ENCODE measurements at regions of chr1 and their contacts with region 1.

Region 1: GRCh38 chr1:36223993-36224536 is at the start of gene THRAP3:
- DNase-seq: peak; percentile 100
- H3K4me3 Mint-ChIP-seq: peak within 1 kb of the TSS; percentile 95
- H3K27ac Mint-ChIP-seq: peak within 1 kb of the TSS; percentile 100
- H3K4me1 Mint-ChIP-seq: peaks cover 36% of the 10 kb centered on the region
- H3K27me3 Mint-ChIP-seq: peaks cover 2% of the 10 kb centered on the region
- total RNA-seq, gene THRAP3: 147 and 154 TPM in 2 replicates

Region 2: GRCh38 chr1:35882945-35883634 is 341.0 kb before region 1 on chr1 and contains the start of gene AGO1:
- intact Hi-C with region 1: loop called (anchors 1 kb)
- DNase-seq: peak; percentile 97
- H3K4me3 Mint-ChIP-seq: peak within 1 kb of the TSS; percentile 95
- H3K27ac Mint-ChIP-seq: peak within 1 kb of the TSS; percentile 64
- H3K4me1 Mint-ChIP-seq: peaks cover 48% of the 10 kb centered on the region
- H3K27me3 Mint-ChIP-seq: peaks cover 6% of the 10 kb centered on the region
- total RNA-seq, gene AGO1: 39.0 and 39.5 TPM in 2 replicates

Region 3: DNA sequence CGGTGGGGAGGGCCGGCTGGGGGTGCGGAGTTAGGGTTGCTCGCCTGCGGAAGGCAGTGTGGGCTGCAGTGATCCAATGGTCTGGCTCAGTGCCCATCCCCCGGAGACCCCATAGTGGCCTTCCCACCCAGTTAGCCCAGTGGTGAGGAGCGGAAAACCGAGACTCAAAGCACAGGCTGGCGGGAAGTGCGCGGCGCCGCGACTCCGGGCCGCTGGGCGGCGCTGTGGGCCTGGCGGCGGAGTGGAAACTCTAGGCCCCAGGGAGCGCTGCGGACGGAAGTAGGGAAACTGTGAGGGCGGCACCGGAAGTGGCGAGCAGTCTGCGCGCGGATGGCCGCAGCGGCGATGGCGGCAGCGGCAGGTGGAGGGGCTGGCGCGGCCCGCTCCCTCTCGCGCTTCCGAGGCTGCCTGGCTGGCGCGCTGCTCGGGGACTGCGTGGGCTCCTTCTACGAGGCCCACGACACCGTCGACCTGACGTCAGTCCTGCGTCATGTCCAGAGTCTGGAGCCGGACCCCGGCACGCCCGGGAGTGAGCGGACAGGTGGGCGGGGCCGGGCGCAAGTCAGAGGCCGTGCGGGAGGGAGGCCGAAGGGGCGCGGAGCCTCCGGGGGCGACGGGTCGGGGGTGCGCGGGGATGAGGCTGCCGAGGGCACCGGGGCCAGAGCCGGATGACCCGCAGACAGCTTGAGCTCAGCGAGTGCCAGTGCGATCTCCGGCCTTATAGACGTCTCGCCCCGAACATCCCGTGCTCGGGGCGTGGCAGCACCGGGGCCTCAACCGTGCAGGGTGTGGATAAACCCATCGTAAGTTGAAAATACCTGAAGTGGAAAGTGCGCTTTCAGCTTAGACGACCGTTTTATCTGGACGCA is 135.3 kb before region 1 on chr1 and contains the start of gene ADPRS:
- intact Hi-C with region 1: loop called (anchors 1 kb)
- DNase-seq: peak; percentile 88
- H3K4me3 Mint-ChIP-seq: peak within 1 kb of the TSS; percentile 97
- H3K27ac Mint-ChIP-seq: peak within 1 kb of the TSS; percentile 96
- H3K4me1 Mint-ChIP-seq: peaks cover 20% of the 10 kb centered on the region
- H3K27me3 Mint-ChIP-seq: peaks cover 7% of the 10 kb centered on the region
- total RNA-seq, gene ADPRS: 32.6 and 33.6 TPM in 2 replicates

Region 4: DNA sequence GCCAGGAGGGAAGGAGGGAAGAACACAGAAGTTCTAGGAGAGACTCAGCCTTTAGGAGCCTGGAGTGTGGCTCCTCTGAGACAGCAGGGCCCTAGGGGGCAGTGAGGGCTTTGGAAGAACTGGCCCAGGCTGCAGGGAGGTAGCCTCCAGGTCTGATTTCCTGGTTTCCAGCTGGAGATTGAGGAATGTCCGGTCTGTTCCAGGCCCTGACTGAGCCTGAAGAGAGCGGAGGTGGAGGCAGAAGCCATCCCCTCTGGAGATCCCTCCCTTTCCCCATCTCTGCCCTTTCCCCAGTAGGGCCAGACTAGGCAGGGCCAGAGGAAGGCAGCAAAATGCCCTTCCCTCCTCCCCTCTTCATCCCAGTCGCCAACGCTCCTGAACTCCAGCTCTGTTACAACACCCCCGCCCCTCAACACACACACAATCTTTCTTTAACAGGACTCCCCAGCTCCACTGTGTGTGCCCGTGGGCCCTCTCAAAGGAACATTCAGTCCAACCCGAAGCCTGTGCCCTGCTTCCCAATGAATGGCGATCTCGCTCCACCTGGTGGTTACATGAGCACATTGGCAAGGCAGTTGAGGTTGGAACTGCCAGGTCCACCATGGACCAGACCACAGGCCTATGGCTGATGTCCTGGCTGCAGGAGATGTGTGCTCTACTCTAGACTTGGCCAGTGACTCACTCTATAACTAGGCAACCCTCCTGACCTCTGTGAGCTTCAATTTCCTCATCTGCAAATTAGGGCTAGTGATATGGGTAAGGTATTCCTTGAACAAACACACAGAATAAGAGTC is 36.1 kb before region 1 on chr1:
- intact Hi-C with region 1: loop called (anchors 1 kb)
- DNase-seq: peak; percentile 76
- H3K4me3 Mint-ChIP-seq: no peak overlapping the region
- H3K27ac Mint-ChIP-seq: peak overlapping the region; percentile 88
- H3K4me1 Mint-ChIP-seq: peaks cover 6% of the 10 kb centered on the region
- H3K27me3 Mint-ChIP-seq: no peaks in the 10 kb centered on the region

Region 5: GRCh38 chr1:36285448-36286101 is 61.5 kb after region 1 on chr1:
- intact Hi-C with region 1: loop called (anchors 1 kb)
- DNase-seq: peak; percentile 53
- H3K4me3 Mint-ChIP-seq: no peak overlapping the region
- H3K27ac Mint-ChIP-seq: peak overlapping the region; percentile 63
- H3K4me1 Mint-ChIP-seq: peaks cover 42% of the 10 kb centered on the region
- H3K27me3 Mint-ChIP-seq: no peaks in the 10 kb centered on the region

Region 6: DNA sequence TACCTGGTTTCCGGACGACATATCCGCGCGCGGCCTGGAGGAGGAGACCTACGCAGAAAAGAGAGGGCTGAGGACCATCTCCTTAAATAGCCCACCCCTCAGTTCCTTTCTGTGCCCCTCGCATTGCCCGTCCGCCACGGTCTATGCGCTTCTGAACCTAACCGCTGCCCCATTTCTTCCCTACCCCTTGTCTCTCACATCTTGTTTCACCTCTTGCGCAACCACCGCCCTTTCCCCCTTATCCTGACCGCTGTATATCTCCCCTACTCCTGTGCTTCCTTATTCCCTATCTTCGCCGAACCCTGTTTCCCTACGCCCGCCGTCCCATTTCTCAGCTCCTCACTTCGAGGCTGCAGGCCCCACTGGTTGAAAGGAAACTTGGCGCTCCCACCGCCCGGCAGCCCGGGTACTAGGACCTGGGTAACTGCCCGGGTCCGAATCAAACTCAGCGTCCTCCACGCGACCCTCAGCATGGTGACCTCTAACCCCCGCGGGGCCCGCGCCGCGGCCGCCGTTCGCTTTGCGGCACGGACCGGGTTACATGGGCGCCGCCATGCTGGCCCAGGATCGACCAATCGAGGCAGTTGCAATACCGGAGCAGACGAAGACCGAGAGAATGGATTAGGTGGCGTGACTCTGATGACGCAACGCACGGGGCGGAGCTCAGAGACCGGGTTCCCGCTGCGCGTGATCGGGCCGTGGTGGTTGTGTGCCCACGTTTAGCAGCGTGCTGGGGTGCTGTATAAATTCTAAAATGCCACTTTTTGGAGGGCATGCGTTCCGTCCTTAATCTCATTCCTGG is 239.9 kb after region 1 on chr1 and contains the start of gene MRPS15:
- intact Hi-C with region 1: loop called (anchors 1 kb)
- DNase-seq: peak; percentile 92
- H3K4me3 Mint-ChIP-seq: peak within 1 kb of the TSS; percentile 100
- H3K27ac Mint-ChIP-seq: peak within 1 kb of the TSS; percentile 97
- H3K4me1 Mint-ChIP-seq: peaks cover 63% of the 10 kb centered on the region
- H3K27me3 Mint-ChIP-seq: no peaks in the 10 kb centered on the region
- total RNA-seq, gene MRPS15: 118 and 121 TPM in 2 replicates

Measured in activated T-helper 1 cell treated with anti-CD3 and anti-CD28 coated beads, Interleukin-12 subunit alpha, Interleukin-12 subunit beta, Interleukin-2, Interleukin-4 antibody, amounts not matched to agents 30 ng/mL and 10 ng/mL and 1 ng/mL, durations not matched to agents 14 hours and 24 hours and 36 hours (primary cell).